Activated B cell treated with CpG ODN at 0.5 μM for 24 hours (primary cell): ENCODE measurements at regions of chr3 and their contacts with region 1.

Region 1: DNA sequence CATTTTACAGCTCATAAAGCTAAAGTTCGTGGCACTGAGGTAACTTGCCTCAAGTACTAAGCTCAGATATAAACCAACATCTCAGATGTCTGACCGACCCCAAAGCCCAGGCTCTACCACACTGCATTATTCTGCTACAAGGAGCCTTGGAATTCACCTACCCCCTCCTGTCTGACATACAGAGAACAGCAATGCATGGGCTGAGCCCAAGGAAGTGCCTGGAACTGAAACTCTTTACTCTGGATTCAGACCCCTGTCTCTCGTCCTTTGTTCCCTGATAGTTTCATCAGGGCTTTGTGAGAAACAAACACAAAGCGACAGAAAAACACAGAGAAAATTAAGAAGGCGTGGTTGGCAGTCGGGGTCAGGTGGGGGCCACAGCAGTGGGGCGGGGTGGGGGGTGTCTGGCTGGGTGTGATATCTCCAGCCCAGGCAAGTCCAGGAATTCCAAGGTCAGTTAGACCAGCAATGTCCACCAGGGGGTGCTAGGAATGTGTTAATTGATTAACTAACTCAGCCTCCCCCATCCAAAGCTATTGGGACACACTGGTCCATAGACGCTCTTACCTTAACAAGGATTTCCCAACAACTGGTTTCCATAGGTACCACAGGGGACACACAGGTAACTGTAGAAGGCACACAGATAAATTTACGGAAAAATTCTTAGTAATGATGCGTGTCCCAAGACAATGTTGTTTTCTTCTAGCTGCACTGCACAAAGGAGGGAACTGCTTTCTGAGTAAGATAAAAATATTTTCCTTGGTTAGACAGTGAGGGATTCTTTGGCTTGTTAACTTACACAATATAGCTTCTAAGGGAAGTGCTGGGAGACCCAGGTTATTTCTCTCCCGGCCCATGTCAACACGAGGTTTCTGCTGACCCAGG is 18.8 kb upstream of the SSUH2 start:
- DNase-seq: no peak
- ATAC-seq: no peak
- H3K4me3 Mint-ChIP-seq: no peak overlapping the region
- H3K27ac Mint-ChIP-seq: no peak overlapping the region
- H3K4me1 Mint-ChIP-seq: peaks cover 31% of the 10 kb centered on the region
- H3K27me3 Mint-ChIP-seq: peaks cover 2% of the 10 kb centered on the region
- CTCF ChIP-seq: peak; percentile 51

Region 2: GRCh38 chr3:8103954-8104353 is 559.5 kb before region 1 on chr3:
- CTCF ChIA-PET with region 1: no interaction called
- POLR2A ChIA-PET with region 1: no interaction called
- intact Hi-C with region 1: no loop called
- DNase-seq: no peak
- ATAC-seq: no peak
- H3K4me3 Mint-ChIP-seq: no peak overlapping the region
- H3K27ac Mint-ChIP-seq: no peak overlapping the region
- H3K4me1 Mint-ChIP-seq: no peaks in the 10 kb centered on the region
- H3K27me3 Mint-ChIP-seq: no peaks in the 10 kb centered on the region
- CTCF ChIP-seq: no peak

Region 3: GRCh38 chr3:8769088-8769822 is 105.8 kb after region 1 on chr3 and contains the start of gene OXTR:
- CTCF ChIA-PET with region 1: no interaction called
- POLR2A ChIA-PET with region 1: no interaction called
- intact Hi-C with region 1: loop called (anchors 1 kb)
- DNase-seq: peak; percentile 64
- ATAC-seq: peak; percentile 89
- H3K4me3 Mint-ChIP-seq: peak within 1 kb of the TSS; percentile 79
- H3K27ac Mint-ChIP-seq: no peak within 1 kb of the TSS
- H3K4me1 Mint-ChIP-seq: peaks cover 21% of the 10 kb centered on the region
- H3K27me3 Mint-ChIP-seq: peaks cover 41% of the 10 kb centered on the region
- CTCF ChIP-seq: no peak
- total RNA-seq, gene OXTR: 2.0 and 2.5 TPM in 2 replicates